Heart left ventricle (tissue), 16 donors: ENCODE measurements at regions of chr17 and their contacts with region 1.

Region 1: DNA sequence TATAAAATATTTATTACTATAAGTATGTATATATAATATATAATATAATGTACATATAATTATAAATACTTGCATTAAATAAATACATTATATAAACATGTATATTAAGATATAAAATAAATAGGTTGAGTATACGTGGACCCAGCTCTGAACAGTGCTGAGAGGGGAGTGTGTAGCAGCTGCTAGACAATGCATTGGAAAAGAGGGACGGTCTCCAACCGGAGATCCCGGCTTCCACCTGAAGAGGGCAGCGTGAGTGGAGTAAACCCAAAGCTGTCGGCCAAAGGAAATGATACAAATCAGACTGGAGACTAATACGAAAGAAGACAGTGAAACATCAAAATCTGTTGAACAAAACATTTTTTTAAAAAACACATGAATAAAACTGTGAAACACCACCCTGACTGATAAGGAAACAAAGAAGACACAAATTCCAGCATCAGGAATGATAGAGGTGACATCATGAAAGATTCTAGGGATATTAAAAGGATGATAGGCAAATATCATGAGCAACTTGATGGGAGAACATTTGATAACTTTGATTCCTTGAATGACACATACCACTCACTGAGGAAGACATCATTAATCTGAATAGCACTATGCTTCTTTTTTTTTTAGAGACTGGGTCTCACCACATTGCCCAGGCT is 125.4 kb upstream of the CHMP6 start:
- DNase-seq: peak; percentile 49 to 81 (median 58)
- ATAC-seq: peak in 3 of 4 donors; percentile 69 to 80 (median 77)
- H3K4me3 ChIP-seq: no peak overlapping the region
- H3K27ac ChIP-seq: no peak overlapping the region
- H3K4me1 ChIP-seq: peaks cover 0 to 21% (median 2%) of the 10 kb centered on the region in 12 donors
- H3K27me3 ChIP-seq: no peaks in the 10 kb centered on the region
- CTCF ChIP-seq: peak; percentile 58 to 90 (median 74)
- POLR2A ChIP-seq: no peak

Region 2: GRCh38 chr17:80899402-80900268 is 33.4 kb after region 1 on chr17:
- intact Hi-C with region 1: no loop called
- DNase-seq: no peak
- ATAC-seq: no peak
- H3K4me3 ChIP-seq: no peak overlapping the region
- H3K27ac ChIP-seq: no peak overlapping the region
- H3K4me1 ChIP-seq: peaks cover 0 to 6% (median 0%) of the 10 kb centered on the region in 12 donors
- H3K27me3 ChIP-seq: no peaks in the 10 kb centered on the region
- CTCF ChIP-seq: peak in 11 of 12 donors; percentile 11 to 55 (median 38)
- POLR2A ChIP-seq: no peak

Region 3: DNA sequence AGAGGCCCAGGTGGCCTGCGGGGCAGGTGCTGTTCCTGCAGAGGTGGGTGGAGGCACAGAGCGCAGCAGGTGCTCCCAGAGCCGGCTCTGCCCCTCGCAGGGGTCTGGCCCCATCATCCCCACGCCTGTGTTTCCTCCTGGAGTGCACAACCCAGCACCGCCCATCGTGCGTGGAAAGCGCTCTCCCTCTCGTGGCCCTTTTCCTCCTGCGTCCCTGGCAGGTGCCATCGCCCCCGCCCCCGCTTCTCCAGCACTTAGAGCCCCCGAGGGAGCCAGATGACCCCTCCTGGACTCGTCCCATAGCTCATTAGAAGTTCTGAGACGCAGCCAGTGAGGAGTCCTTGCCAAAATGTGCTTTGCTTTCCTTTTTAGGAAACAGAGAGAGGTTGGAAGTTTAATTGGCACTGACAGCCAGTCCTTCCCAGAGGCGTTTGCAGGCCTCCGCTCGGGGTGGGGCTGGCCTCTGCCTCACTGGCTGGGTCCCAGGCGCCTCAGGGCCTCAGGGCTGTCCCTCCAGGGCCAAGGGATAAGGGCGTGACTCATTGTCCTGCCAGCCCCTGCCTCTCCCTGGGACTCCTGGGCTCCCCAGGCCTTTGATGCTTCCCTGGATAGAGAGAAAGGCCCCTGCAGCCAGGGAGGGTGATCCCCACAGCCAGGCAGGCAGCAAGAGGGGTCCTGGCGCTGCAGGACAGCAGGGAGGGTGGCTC is 93.2 kb after region 1 on chr17:
- intact Hi-C with region 1: loop called in 1 of 10 experiments (anchors 10 kb)
- DNase-seq: peak; percentile 88 to 95 (median 91)
- ATAC-seq: peak; percentile 93 to 96 (median 96)
- H3K4me3 ChIP-seq: peak overlapping the region in 5 of 12 donors; percentile 8 to 28 (median 10)
- H3K27ac ChIP-seq: peak overlapping the region; percentile 73 to 98 (median 90)
- H3K4me1 ChIP-seq: peaks cover 3 to 26% (median 20%) of the 10 kb centered on the region in 12 donors
- H3K27me3 ChIP-seq: no peaks in the 10 kb centered on the region
- CTCF ChIP-seq: peak in 3 of 12 donors; percentile 5 to 13 (median 7)
- POLR2A ChIP-seq: no peak

Region 4: GRCh38 chr17:80981062-80981902 is 115.0 kb after region 1 on chr17:
- intact Hi-C with region 1: loop called in 5 of 10 experiments (anchors 5 kb)
- DNase-seq: peak in 1 of 5 donors; percentile 62
- ATAC-seq: peak in 2 of 4 donors; percentile 31
- H3K4me3 ChIP-seq: peak overlapping the region in 3 of 12 donors; percentile 13 to 15 (median 13)
- H3K27ac ChIP-seq: no peak overlapping the region
- H3K4me1 ChIP-seq: peaks cover 0 to 18% (median 8%) of the 10 kb centered on the region in 12 donors
- H3K27me3 ChIP-seq: peaks cover 0 to 17% (median 10%) of the 10 kb centered on the region in 9 donors
- CTCF ChIP-seq: peak; percentile 69 to 93 (median 85)
- POLR2A ChIP-seq: no peak